ENCODE measurements at regions of chr19 and their contacts with region 1.

Region 1: GRCh38 chr19:11924886-11925650 is at the start of gene ZNF700:
- DNase-seq: peak; percentile 91
- H3K4me3 ChIP-seq: peak within 1 kb of the TSS; percentile 59 to 90 (median 81)
- H3K27ac ChIP-seq: peak within 1 kb of the TSS; percentile 64
- H3K4me1 ChIP-seq: peaks cover 15% of the 10 kb centered on the region
- H3K27me3 ChIP-seq: no peaks in the 10 kb centered on the region
- CTCF ChIP-seq: no peak
- POLR2A ChIP-seq: peak; percentile 87
- total RNA-seq, gene ZNF700: 6.9 and 7.9 TPM in 2 replicates

Region 2: GRCh38 chr19:11699931-11700794 is 224.9 kb before region 1 on chr19:
- CTCF ChIA-PET with region 1: interaction called, 10 read pairs
- POLR2A ChIA-PET with region 1: no interaction called
- dilution Hi-C with region 1: no loop called
- intact Hi-C with region 1: no loop called
- DNase-seq: peak; percentile 34
- H3K4me3 ChIP-seq: no peak overlapping the region
- H3K27ac ChIP-seq: no peak overlapping the region
- H3K4me1 ChIP-seq: peaks cover under 1% of the 10 kb centered on the region
- H3K27me3 ChIP-seq: no peaks in the 10 kb centered on the region
- CTCF ChIP-seq: peak; percentile 47 to 58
- POLR2A ChIP-seq: no peak

Region 3: DNA sequence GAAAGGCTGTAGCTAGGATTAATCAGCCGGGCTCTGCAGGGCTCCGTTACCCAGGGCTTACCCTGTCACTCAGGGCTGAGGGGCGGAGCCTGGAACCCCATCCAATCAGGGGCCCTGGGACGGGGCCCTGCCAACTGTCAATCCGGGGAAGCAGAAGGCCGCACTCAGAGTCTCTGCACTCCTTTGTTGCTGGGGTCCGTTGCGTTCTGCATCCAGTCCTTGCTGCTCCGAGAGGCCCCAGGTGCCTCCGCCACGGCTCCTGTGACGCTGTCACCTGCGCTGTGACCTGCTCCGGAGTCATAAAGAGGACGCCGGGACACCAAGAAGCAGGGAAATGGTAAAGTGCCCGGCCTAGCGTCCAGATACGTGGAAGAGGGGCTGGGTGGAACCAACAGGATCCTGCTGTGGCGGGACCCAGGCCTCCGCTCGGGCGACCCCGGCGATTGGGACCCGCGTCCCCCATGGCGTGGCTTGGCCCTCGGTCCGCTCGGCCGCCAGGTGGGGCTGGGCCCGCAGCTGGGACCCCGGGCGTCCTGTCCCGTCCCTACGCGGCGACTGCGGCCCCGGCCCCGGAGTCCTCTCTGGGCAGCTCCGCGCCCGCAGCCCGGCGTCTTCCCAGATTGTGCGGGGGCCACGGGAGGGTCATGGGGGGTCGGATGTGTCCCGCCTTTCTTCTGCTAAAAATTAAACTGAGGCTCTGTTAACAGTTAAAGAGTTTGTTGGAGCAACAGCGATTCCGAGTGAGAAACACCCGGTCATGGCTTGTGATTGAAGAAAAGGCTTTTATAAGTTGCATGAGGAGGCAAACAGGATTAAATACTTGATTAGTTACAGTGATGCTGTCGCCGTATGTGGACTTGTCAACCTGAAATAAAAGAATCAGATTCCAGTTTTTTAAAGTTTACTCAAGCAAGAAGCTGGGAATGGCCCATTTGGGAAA is 126.4 kb before region 1 on chr19 and contains the start of gene ZNF491:
- CTCF ChIA-PET with region 1: interaction called, 23 read pairs
- POLR2A ChIA-PET with region 1: interaction called, 5 read pairs
- dilution Hi-C with region 1: no loop called
- intact Hi-C with region 1: loop called (anchors 5 kb)
- DNase-seq: peak; percentile 83
- H3K4me3 ChIP-seq: peak within 1 kb of the TSS; percentile 39 to 75 (median 62)
- H3K27ac ChIP-seq: no peak within 1 kb of the TSS
- H3K4me1 ChIP-seq: peaks cover 7% of the 10 kb centered on the region
- H3K27me3 ChIP-seq: no peaks in the 10 kb centered on the region
- CTCF ChIP-seq: peak; percentile 13 to 21
- POLR2A ChIP-seq: peak; percentile 52
- total RNA-seq, gene ZNF491: 0.85 and 1.1 TPM in 2 replicates

Region 4: DNA sequence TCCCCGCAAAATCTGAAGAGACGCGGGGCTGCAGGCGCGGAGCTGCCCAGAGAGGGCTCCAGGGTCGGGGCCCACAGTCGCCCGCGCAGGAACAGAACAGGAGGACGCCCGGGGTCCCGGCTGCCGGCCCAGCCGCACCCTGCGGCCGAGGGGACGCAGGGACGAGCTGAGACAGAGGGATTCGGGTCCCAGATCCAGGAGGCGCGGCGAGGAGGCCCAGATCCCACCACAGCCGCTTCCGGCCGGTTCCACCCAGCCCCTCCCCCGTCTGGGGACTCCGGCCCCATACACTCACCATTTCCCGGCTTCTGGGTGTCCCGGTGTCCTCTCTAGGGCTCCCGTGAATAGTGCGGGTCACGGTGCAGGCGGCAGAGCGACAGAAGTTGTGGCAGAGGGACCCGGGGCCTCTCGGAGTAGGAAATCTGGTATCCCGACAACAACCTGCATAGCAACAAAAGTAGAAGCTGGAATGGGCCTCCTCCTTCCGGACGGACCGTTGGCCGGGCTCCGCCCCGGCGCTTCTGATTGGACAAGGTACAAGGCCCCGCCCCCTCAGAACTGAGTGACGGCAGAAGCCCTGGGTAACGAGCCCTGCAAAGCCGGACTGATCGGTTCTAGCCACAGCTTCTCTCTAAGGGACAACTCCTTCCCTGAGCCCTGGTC is 214.9 kb after region 1 on chr19 and contains the start of gene ZNF20:
- CTCF ChIA-PET with region 1: interaction called, 28 read pairs
- POLR2A ChIA-PET with region 1: no interaction called
- dilution Hi-C with region 1: no loop called
- intact Hi-C with region 1: loop called (anchors 1 kb)
- DNase-seq: peak; percentile 90
- H3K4me3 ChIP-seq: peak within 1 kb of the TSS; percentile 63 to 72 (median 68)
- H3K27ac ChIP-seq: peak within 1 kb of the TSS; percentile 30
- H3K4me1 ChIP-seq: no peaks in the 10 kb centered on the region
- H3K27me3 ChIP-seq: no peaks in the 10 kb centered on the region
- CTCF ChIP-seq: no peak
- POLR2A ChIP-seq: no peak
- total RNA-seq, gene ZNF20: 0.35 and 0.88 TPM in 2 replicates

Region 5: DNA sequence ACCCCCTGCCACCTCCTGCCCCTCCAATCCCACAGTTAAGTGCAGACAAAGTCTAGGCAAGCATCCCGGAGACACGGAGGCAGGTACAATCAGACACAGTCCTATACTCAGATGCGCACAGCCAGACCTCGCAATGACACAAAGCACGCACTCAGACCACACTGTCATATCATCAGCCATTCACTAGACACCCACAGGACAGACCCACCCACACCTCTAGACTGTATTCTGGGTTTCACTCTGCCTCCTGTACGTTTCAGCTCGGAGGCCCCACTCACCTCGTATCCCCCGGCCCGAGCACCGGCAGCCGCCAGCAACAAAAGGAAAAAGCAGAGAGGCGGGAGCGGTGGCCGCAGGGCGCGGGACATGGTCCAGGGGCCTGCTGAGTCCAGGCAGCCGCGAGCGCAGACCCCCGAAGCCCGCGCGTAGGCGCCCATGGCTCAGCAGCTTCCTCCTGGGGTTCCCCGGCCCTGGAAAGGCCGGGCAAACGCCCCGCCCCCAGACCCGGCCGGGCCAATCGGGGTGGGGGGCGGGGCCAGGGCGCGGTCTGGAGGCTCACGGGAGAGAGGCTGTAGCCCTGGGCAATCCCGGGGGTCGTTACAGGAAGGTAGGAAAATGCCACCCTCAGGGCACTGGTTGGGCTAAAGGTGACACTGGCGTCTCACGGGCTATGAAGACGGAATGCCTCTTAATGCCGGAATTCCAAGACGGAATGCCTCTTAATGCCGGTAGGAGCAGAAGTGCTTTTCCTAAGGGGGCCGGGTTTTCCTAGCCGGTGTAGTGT is 741.4 kb after region 1 on chr19 and contains the starts of genes MAN2B1 and WDR83:
- CTCF ChIA-PET with region 1: interaction called, 21 read pairs
- POLR2A ChIA-PET with region 1: no interaction called
- dilution Hi-C with region 1: no loop called
- intact Hi-C with region 1: loop called (anchors 5 kb)
- DNase-seq: peak; percentile 82
- H3K4me3 ChIP-seq: peak within 1 kb of the TSS; percentile 60 to 73 (median 67)
- H3K27ac ChIP-seq: peak within 1 kb of the TSS; percentile 38
- H3K4me1 ChIP-seq: peaks cover 20% of the 10 kb centered on the region
- H3K27me3 ChIP-seq: no peaks in the 10 kb centered on the region
- CTCF ChIP-seq: no peak
- POLR2A ChIP-seq: peak; percentile 49
- total RNA-seq, gene MAN2B1: 73.0 and 76.8 TPM in 2 replicates
- total RNA-seq, gene WDR83: 10.9 and 11.8 TPM in 2 replicates